ENCODE measurements at regions of chr11 and their contacts with region 1.

Region 1: GRCh38 chr11:66480117-66480938 is at the start of gene DPP3:
- DNase-seq: peak; percentile 88
- H3K4me3 ChIP-seq: peak within 1 kb of the TSS; percentile 80
- H3K27ac ChIP-seq: peak within 1 kb of the TSS; percentile 96
- H3K27me3 ChIP-seq: no peaks in the 10 kb centered on the region
- CTCF ChIP-seq: no peak
- polyA plus RNA-seq, gene DPP3: 54.6 and 60.2 TPM in 2 replicates

Region 2: GRCh38 chr11:66438504-66439466 is 41.5 kb before region 1 on chr11 and contains the start of gene MRPL11:
- CTCF ChIA-PET with region 1: interaction called, 3 read pairs
- POLR2A ChIA-PET with region 1: interaction called, 11 read pairs
- DNase-seq: peak; percentile 80
- H3K4me3 ChIP-seq: peak within 1 kb of the TSS; percentile 81
- H3K27ac ChIP-seq: no peak within 1 kb of the TSS
- H3K27me3 ChIP-seq: no peaks in the 10 kb centered on the region
- CTCF ChIP-seq: peak; percentile 69
- polyA plus RNA-seq, gene MRPL11: 43.1 and 55.1 TPM in 2 replicates

Region 3: GRCh38 chr11:66466225-66467027 is 13.9 kb before region 1 on chr11 and contains the start of gene PELI3:
- CTCF ChIA-PET with region 1: interaction called, 6 read pairs
- POLR2A ChIA-PET with region 1: interaction called, 32 read pairs
- DNase-seq: peak; percentile 79
- H3K4me3 ChIP-seq: peak within 1 kb of the TSS; percentile 69
- H3K27ac ChIP-seq: peak within 1 kb of the TSS; percentile 21
- H3K27me3 ChIP-seq: no peaks in the 10 kb centered on the region
- CTCF ChIP-seq: no peak
- polyA plus RNA-seq, gene PELI3: 4.6 and 5.6 TPM in 2 replicates

Region 4: GRCh38 chr11:66491315-66491935 is 11.1 kb after region 1 on chr11:
- CTCF ChIA-PET with region 1: no interaction called
- POLR2A ChIA-PET with region 1: interaction called, 22 read pairs
- DNase-seq: no peak
- H3K4me3 ChIP-seq: no peak overlapping the region
- H3K27ac ChIP-seq: no peak overlapping the region
- H3K27me3 ChIP-seq: no peaks in the 10 kb centered on the region
- CTCF ChIP-seq: peak; percentile 45

Region 5: GRCh38 chr11:66743271-66743968 is 263.1 kb after region 1 on chr11:
- CTCF ChIA-PET with region 1: no interaction called
- POLR2A ChIA-PET with region 1: no interaction called
- DNase-seq: no peak
- H3K4me3 ChIP-seq: no peak overlapping the region
- H3K27ac ChIP-seq: no peak overlapping the region
- H3K27me3 ChIP-seq: no peaks in the 10 kb centered on the region
- CTCF ChIP-seq: no peak

Measured in AG04450 (cell line).